ENCODE measurements at regions of chr22 and their contacts with region 1.

Region 1: DNA sequence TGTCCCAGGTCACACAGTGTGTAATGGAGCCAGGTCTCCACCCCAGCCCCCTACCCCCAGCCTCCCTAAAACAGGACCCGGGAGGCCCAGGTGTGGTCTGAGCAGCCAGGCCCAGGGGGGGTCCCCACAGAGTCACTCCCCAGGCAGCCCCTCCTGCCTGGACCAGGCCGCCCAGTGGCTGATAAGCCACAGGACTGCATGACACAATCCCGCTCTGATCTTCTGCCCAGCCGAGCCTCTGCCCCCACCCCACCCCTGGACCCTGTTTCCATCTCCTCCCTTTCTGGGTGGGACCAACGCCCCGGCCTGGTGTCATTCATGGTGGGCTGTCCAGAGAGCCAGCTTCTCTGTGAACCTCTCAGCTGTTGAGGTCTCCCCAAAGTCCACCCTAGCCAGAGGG is 7.8 kb upstream of the LIF start:
- DNase-seq: no peak
- ATAC-seq: no peak

Region 2: GRCh38 chr22:28505416-28506149 is 1748.7 kb before region 1 on chr22:
- intact Hi-C with region 1: no loop called
- DNase-seq: peak; percentile 52
- ATAC-seq: peak; percentile 42

Region 3: DNA sequence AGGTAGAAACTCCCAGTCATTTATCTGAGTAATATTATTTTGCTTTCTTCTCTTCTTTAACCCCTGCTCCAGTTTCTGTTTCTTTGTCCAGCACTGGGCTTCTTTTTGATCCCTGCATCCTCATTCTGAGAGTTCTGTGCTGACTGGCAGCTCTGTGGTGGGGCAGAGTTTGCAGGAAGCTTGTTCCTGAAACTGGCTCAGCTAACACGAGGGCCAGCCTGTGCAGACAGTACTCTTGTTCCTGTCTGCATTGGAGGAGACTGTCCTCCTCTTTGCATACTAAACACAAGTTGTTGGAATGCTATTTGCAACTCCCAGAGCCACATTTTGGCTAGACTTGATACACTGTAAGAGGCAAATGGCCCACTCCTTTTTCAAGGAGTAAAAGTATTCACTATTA is 267.2 kb before region 1 on chr22:
- intact Hi-C with region 1: no loop called
- DNase-seq: no peak
- ATAC-seq: no peak

Region 4: GRCh38 chr22:30104501-30105156 is 149.7 kb before region 1 on chr22:
- intact Hi-C with region 1: loop called (anchors 2 kb)
- DNase-seq: no peak
- ATAC-seq: no peak

Region 5: GRCh38 chr22:30187529-30188407 is 66.5 kb before region 1 on chr22:
- intact Hi-C with region 1: no loop called
- DNase-seq: no peak
- ATAC-seq: no peak

Region 6: GRCh38 chr22:30423982-30424963 is 170.0 kb after region 1 on chr22:
- intact Hi-C with region 1: no loop called
- DNase-seq: peak; percentile 99
- ATAC-seq: peak; percentile 97